ENCODE measurements at regions of chr16 and their contacts with region 1.

Region 1: DNA sequence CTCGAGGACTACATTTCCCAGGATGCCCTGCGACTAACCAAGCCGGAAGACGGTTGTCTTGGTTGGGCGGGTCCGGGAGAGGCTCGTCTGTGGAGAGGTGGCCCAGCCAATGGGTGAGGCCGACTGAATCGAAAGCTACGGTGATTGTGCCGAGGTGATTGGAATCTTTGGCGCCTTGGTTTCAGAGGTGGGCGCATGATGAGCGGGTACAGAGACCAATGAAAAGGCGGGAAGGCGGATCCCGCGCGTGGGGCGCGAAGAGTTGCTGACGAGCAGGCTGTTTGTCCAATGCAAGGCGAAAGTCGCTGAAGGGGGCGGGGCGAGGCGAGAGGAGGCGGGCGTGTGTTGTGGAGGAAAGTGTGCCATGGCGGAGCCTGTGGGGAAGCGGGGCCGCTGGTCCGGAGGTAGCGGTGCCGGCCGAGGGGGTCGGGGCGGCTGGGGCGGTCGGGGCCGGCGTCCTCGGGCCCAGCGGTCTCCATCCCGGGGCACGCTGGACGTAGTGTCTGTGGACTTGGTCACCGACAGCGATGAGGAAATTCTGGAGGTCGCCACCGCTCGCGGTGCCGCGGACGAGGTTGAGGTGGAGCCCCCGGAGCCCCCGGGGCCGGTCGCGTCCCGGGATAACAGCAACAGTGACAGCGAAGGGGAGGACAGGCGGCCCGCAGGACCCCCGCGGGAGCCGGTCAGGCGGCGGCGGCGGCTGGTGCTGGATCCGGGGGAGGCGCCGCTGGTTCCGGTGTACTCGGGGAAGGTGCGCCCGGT is at the start of gene NFATC2IP:
- H3K4me3 ChIP-seq: peak within 1 kb of the TSS; percentile 90
- H3K27ac ChIP-seq: peak within 1 kb of the TSS; percentile 83
- H3K4me1 ChIP-seq: no peaks in the 10 kb centered on the region
- CTCF ChIP-seq: no peak

Region 2: GRCh38 chr16:28623172-28623711 is 327.6 kb before region 1 on chr16:
- CTCF ChIA-PET with region 1: no interaction called
- POLR2A ChIA-PET with region 1: no interaction called
- H3K4me3 ChIP-seq: no peak overlapping the region
- H3K27ac ChIP-seq: no peak overlapping the region
- H3K4me1 ChIP-seq: no peaks in the 10 kb centered on the region
- CTCF ChIP-seq: no peak

Region 3: GRCh38 chr16:28846080-28846932 is 104.5 kb before region 1 on chr16 and contains the start of gene TUFM:
- CTCF ChIA-PET with region 1: interaction called, 20 read pairs
- POLR2A ChIA-PET with region 1: interaction called, 10 read pairs
- H3K4me3 ChIP-seq: peak within 1 kb of the TSS; percentile 95
- H3K27ac ChIP-seq: peak within 1 kb of the TSS; percentile 65
- H3K4me1 ChIP-seq: no peaks in the 10 kb centered on the region
- CTCF ChIP-seq: peak; percentile 97

Region 4: GRCh38 chr16:28879841-28880588 is 70.8 kb before region 1 on chr16:
- CTCF ChIA-PET with region 1: interaction called, 10 read pairs
- POLR2A ChIA-PET with region 1: interaction called, 11 read pairs
- H3K4me3 ChIP-seq: peak overlapping the region; percentile 62
- H3K27ac ChIP-seq: peak overlapping the region; percentile 67; the same call in 1 of the 2 replicates
- H3K4me1 ChIP-seq: peaks cover 11% of the 10 kb centered on the region
- CTCF ChIP-seq: peak; percentile 6; the same call in 1 of the 2 replicates

Region 5: DNA sequence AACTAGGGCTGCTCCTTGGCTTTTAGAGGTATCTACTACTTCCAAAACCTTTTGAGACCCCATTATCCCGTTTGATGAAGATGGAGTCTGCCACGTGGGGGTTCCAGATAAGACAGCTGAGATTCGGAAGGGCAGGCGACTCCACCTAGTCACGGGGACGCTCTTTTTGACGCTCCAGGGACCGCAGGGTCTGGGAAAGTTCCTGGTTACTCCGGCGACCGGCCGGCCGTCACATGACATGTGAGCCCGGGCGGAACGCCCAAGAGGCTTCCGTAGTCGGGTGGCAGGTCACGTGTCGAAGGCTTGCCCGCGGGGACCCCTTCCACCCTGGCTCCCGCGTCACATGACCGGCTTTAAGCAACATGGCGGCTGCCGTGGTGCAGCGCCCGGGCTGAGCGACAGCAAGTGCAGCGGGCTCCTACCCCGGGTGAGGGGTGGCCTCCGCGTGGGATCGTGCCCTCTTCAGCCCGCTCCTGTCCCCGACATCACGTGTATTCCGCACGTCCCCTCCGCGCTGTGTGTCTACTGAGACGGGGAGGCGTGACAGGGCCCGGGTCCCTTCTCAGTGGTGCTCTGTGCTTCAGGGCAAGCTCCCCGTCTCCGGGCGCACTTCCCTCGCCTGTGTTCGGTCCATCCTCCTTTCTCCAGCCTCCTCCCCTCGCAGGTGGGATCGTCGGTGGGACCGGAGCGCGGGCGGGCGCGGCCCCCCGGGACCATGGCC is 23.8 kb after region 1 on chr16 and contains the start of gene SPNS1:
- CTCF ChIA-PET with region 1: interaction called, 5 read pairs
- POLR2A ChIA-PET with region 1: interaction called, 10 read pairs
- H3K4me3 ChIP-seq: peak within 1 kb of the TSS; percentile 97
- H3K27ac ChIP-seq: peak within 1 kb of the TSS; percentile 20; the same call in 1 of the 2 replicates
- H3K4me1 ChIP-seq: no peaks in the 10 kb centered on the region
- CTCF ChIP-seq: no peak

Region 6: DNA sequence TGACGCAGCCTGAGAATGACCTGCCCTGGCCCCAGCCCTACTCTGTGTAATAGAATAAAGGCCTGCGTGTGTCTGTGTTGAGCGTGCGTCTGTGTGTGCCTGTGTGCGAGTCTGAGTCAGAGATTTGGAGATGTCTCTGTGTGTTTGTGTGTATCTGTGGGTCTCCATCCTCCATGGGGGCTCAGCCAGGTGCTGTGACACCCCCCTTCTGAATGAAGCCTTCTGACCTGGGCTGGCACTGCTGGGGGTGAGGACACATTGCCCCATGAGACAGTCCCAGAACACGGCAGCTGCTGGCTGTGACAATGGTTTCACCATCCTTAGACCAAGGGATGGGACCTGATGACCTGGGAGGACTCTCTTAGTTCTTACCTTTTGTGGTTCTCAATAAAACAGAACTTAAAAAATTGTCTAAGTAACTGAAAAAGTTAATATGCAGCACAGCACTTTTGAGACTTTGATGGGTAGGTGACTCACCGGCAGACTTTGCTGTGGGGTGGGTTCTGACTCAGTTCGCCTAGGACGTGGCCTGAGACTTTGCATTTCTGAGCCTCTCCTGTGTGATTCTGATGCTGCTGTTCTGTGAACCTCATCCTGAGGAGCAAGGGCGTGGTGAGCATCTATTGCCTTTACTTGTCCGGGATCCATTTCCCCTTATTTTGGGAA is 39.7 kb after region 1 on chr16:
- CTCF ChIA-PET with region 1: no interaction called
- POLR2A ChIA-PET with region 1: no interaction called
- H3K4me3 ChIP-seq: no peak overlapping the region
- H3K27ac ChIP-seq: no peak overlapping the region
- H3K4me1 ChIP-seq: no peaks in the 10 kb centered on the region
- CTCF ChIP-seq: no peak

Region 7: DNA sequence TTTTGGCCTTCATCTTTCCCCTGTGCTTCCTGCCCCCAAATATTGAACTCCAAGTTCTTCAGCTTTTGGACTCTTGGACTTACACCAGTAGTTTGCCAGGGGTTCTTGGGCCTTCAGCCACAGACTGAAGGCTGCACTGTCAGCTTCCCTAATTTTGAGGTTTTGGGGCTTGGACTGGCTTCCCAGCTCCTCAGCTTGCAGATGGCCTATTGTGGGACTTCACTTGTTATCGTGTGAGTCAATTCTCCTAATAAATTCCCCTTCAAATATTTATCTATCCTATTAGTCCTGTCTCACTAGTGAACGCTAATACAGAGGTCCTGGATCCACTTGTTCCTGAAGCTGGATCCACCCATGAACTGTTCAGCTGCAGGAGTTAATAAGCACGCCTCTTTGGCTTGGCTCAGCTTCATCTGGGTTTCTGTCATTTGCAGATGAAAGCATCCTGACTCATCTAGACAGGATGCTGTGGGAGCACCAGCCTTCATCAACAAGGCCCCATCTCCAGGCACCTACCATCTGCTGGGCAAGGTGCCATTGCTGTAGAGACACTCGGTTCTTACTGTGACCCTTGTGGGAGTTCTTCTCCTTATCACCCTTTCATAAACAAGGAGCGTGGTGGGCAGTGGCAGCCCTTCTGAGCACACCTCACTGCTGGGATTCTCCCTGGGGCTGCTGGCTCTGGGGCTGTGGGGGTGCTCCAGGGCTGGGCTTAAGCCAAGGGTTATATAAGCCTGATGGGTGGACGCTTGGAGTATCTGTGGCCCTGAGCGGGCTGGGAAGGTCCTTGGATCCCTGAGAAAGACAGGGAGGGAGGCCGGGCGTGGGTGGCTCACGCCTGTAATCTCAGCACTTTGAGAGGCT is 57.1 kb after region 1 on chr16:
- CTCF ChIA-PET with region 1: no interaction called
- POLR2A ChIA-PET with region 1: no interaction called
- H3K4me3 ChIP-seq: no peak overlapping the region
- H3K27ac ChIP-seq: no peak overlapping the region
- H3K4me1 ChIP-seq: no peaks in the 10 kb centered on the region
- CTCF ChIP-seq: no peak

Measured in HEK293 (cell line).